ENCODE measurements at regions of chr20 and their contacts with region 1.

Region 1: DNA sequence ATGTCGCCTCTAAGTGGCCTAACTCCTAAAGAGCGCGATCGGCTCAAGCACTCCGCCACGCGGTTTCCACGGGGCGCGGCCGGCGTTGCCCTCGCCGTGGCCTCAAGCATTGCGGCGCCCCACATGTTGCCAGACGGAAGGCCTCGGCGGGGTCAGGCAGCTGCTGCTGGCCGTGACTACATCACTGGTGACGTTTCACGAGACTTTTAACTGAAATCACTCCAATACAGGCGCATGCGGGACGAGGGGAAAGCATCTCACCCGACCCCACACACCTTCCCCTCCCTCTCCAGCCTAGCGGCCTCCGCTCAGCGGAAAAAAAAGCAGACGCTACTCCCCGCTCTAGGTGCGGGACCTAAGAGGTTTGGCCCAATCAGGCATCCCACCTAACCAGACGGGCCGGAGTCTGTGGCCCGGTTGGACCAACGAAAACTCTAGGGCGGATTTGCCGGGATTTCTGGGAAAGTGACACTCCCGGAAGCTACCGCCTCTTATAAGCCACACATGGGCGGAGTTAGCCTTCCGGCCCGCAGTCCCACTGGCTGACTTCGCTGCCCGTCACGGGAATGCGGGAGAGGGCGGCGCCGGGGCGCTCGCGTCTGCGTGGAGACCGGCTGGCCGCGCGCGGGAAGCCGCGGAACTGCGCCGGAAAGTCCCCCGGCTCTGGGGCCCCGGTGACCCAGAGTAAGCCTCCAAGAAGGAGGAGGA is at the start of gene NXT1:
- DNase-seq: peak; percentile 99
- H3K4me3 Mint-ChIP-seq: peak within 1 kb of the TSS; percentile 87
- H3K27ac Mint-ChIP-seq: peak within 1 kb of the TSS; percentile 97
- H3K4me1 Mint-ChIP-seq: peaks cover 17% of the 10 kb centered on the region
- H3K27me3 Mint-ChIP-seq: no peaks in the 10 kb centered on the region
- CTCF ChIP-seq: no peak
- total RNA-seq, gene NXT1: 32.2 and 40.1 TPM in 2 replicates

Region 2: DNA sequence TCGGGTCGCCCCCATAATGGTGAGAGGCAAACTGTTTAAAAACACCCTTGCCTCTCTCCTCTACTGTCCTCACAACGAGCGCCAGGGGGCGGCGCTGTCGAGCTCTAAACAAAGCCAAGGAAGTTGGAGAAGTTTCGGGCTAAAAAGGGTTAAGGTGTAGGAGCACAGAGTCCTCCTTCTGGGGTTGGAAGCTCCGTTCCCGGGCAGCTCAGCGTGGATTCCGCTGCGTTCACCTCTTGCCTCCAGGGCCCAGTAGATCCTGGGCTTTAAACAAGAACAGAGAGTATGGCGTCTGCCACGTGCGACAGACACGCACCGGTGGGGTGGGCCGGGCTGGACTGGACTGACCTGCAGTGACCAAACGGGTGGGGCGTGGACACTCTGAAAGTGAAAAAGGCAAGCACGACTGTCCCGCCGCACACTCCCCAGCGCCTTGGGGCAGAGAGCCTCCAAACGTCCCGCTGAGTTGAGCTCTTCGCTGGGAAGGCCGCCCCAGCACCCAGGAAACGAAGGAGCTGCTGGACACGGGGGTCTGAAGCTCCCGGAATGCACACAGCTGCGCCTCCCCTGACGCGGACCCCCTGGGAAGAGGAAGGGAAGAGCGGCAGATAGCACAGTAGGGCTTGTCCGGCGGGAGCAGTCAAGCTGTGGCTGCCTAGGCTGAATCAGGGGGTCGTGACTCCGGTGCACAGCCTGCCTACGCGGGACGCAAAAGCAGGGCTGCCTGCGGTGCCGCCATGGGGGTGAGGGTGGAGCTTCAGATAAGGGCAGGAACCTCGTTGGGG is 299.3 kb before region 1 on chr20:
- CTCF ChIA-PET with region 1: interaction called, 3 read pairs
- POLR2A ChIA-PET with region 1: interaction called, 14 read pairs
- intact Hi-C with region 1: no loop called
- DNase-seq: peak; percentile 92
- H3K4me3 Mint-ChIP-seq: peak overlapping the region; percentile 74
- H3K27ac Mint-ChIP-seq: peak overlapping the region; percentile 92
- H3K4me1 Mint-ChIP-seq: peaks cover 17% of the 10 kb centered on the region
- H3K27me3 Mint-ChIP-seq: no peaks in the 10 kb centered on the region
- CTCF ChIP-seq: peak; percentile 78

Region 3: GRCh38 chr20:23156170-23156841 is 194.0 kb before region 1 on chr20:
- CTCF ChIA-PET with region 1: interaction called, 5 read pairs
- POLR2A ChIA-PET with region 1: interaction called, 15 read pairs
- intact Hi-C with region 1: no loop called
- DNase-seq: peak; percentile 93
- H3K4me3 Mint-ChIP-seq: no peak overlapping the region
- H3K27ac Mint-ChIP-seq: peak overlapping the region; percentile 99
- H3K4me1 Mint-ChIP-seq: peaks cover 70% of the 10 kb centered on the region
- H3K27me3 Mint-ChIP-seq: no peaks in the 10 kb centered on the region
- CTCF ChIP-seq: no peak

Region 4: GRCh38 chr20:23366384-23366783 is 16.0 kb after region 1 on chr20:
- CTCF ChIA-PET with region 1: interaction called, 36 read pairs
- POLR2A ChIA-PET with region 1: interaction called, 194 read pairs
- intact Hi-C with region 1: no loop called
- DNase-seq: no peak
- H3K4me3 Mint-ChIP-seq: peak overlapping the region; percentile 40
- H3K27ac Mint-ChIP-seq: no peak overlapping the region
- H3K4me1 Mint-ChIP-seq: peaks cover 39% of the 10 kb centered on the region
- H3K27me3 Mint-ChIP-seq: no peaks in the 10 kb centered on the region
- CTCF ChIP-seq: no peak

Region 5: DNA sequence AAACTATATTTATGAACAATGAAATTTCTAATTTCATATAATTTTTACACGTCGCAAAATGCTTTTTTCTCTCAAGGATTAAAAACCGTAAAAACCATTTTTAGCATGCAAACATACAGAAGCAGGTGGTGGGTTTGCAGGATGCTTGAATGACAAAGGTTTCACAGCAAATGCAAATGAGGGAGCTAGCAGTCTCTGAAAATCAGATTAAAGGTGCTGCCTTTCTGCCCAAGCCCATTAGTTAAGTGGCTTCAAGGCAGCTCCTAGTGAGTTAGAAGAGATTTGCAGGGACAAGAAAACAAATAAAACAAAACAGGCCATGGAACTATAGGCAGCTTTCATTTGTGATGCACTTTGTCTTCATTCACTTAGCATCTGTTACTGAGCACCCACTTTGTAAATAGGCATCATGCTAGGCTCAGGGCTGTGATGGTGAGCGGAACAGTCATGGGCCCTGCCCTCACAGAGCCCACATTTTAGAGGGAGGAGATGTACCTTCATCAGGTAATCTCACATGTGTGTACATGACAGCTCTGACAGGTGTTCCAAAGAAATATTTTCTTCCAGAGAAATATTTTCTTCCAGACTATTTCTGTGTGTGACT is 41.5 kb after region 1 on chr20:
- CTCF ChIA-PET with region 1: no interaction called
- POLR2A ChIA-PET with region 1: no interaction called
- intact Hi-C with region 1: no loop called
- DNase-seq: no peak
- H3K4me3 Mint-ChIP-seq: no peak overlapping the region
- H3K27ac Mint-ChIP-seq: no peak overlapping the region
- H3K4me1 Mint-ChIP-seq: no peaks in the 10 kb centered on the region
- H3K27me3 Mint-ChIP-seq: no peaks in the 10 kb centered on the region
- CTCF ChIP-seq: no peak

Region 6: GRCh38 chr20:23585808-23586734 is 235.7 kb after region 1 on chr20:
- CTCF ChIA-PET with region 1: no interaction called
- POLR2A ChIA-PET with region 1: interaction called, 10 read pairs
- intact Hi-C with region 1: no loop called
- DNase-seq: no peak
- H3K4me3 Mint-ChIP-seq: no peak overlapping the region
- H3K27ac Mint-ChIP-seq: no peak overlapping the region
- H3K4me1 Mint-ChIP-seq: peaks cover 21% of the 10 kb centered on the region
- H3K27me3 Mint-ChIP-seq: no peaks in the 10 kb centered on the region
- CTCF ChIP-seq: no peak

Region 7: GRCh38 chr20:23637282-23638221 is 287.2 kb after region 1 on chr20 and contains the start of gene CST3:
- CTCF ChIA-PET with region 1: no interaction called
- POLR2A ChIA-PET with region 1: interaction called, 18 read pairs
- intact Hi-C with region 1: no loop called
- DNase-seq: peak; percentile 91
- H3K4me3 Mint-ChIP-seq: peak within 1 kb of the TSS; percentile 91
- H3K27ac Mint-ChIP-seq: peak within 1 kb of the TSS; percentile 90
- H3K4me1 Mint-ChIP-seq: peaks cover 42% of the 10 kb centered on the region
- H3K27me3 Mint-ChIP-seq: no peaks in the 10 kb centered on the region
- CTCF ChIP-seq: no peak
- total RNA-seq, gene CST3: 303 and 315 TPM in 2 replicates

Region 8: DNA sequence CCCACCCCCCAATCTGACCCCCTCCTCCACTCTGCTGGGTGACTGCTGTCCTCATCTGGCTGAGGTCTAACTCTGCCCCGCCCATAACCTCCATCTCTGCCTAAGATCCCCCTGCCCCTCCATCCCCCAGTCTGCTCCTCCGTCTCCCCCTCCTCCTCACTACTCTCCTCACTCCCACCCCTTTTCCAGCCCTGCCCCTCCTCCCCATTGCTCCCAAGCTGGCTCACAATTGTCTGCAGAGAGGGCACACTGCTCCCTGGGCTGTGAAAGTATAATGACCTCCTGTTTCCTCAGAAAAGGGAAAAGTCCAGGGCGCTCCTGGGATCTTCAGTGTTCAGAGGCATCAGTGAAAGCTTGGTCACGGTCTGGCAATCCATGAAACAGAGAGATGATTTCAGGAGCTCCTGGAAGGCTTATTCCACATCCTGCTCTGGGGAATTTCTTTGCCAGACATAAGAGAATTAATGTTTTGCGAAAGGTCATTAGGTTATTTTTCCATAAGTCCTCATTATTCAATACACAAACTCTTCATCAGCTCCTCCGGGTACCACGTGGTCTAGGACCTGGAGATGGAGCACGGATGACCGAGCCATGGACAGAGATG is 507.7 kb after region 1 on chr20:
- CTCF ChIA-PET with region 1: no interaction called
- POLR2A ChIA-PET with region 1: no interaction called
- intact Hi-C with region 1: no loop called
- DNase-seq: no peak
- H3K4me3 Mint-ChIP-seq: no peak overlapping the region
- H3K27ac Mint-ChIP-seq: no peak overlapping the region
- H3K4me1 Mint-ChIP-seq: no peaks in the 10 kb centered on the region
- H3K27me3 Mint-ChIP-seq: no peaks in the 10 kb centered on the region
- CTCF ChIP-seq: no peak

Measured in MCF 10A (cell line).